ENCODE measurements at regions of chr2 and their contacts with region 1.

Region 1: DNA sequence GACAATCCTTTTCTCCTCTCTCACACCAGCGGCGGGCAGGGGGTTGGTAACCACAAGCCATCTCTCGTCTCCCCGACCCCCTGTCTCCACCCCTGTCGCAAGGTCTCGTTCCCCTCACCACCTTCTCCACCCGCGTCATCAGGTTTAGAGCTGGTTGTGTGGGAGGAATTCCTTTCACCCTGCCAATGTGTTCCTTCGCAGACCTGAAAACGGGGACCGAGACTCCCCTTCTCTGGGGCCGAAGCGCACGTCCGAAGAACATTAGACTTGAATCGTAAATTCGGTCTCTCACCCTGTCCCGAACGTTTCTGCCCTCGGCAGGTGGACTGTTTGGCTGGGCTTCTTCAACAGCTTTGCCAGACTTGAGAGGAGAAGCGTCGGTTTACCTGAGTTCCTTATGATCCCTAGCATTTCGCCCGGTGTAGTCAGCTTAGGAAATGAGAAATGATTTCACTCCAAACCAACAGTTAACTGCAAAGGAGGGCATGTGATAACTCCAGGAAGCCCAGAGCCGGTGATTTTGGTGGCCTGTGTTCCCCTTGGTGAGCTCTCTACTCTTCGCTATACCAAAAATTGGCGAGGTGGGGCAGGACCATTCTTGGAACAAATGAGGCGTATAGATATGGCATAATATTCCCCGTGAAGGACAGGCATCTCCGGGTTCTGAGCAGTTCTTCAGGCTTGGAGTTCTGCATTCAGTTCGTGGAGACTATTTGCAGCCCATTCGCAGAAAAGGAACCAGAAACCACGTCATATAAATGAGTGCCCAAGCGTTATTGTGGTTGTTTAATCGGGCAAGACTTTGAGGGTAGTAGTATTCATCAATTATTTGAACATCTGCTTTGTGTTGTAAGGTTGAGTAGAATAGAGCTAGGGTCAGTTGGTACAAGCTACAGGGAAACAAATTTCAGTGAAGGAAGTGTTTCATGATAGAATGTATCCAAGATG is 694 bp downstream of the CFAP36 start:
- H3K4me3 Mint-ChIP-seq: peak overlapping the region; percentile 90
- H3K27ac Mint-ChIP-seq: peak overlapping the region; percentile 95
- H3K4me1 Mint-ChIP-seq: peaks cover 19% of the 10 kb centered on the region
- H3K27me3 Mint-ChIP-seq: no peaks in the 10 kb centered on the region

Region 2: DNA sequence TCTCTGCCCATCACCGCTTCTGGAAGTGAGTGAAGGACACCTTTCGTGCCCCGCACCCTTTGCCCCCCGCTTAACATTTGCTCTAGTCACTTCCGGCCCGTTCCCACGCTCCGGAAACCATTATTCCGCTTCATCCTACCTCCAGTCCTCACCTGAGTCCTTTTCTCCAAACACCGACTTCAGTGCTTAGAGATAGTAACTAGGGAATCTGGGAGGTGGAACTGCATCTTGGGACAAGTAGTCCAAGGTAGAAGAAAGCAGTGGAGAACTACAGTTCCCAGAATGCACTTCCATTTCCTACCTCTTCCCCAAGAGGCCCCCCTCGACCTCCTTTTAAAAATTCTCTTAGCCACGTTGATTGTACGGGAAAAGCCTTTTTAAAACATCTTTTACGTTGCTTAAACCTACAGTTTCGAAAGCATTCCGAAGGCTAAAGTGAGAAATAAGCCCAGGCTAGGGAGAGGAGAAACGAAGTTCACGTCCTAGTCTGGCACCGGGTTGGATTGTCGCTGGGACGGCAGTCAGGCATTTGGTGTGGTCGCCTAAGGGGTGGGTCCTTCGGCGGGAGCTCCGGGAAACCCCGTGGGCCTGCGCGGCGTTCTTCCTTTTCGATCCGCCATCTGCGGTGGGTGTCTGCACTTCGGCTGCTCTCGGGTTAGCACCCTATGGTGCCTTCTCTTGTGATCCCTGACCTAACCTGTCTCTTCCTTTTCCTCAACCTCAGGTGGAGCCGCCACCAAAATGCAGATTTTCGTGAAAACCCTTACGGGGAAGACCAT is 287.9 kb before region 1 on chr2 and contains the starts of genes CLHC1 and RPS27A:
- intact Hi-C with region 1: loop called (anchors 10 kb)
- H3K4me3 Mint-ChIP-seq: peak within 1 kb of the TSS; percentile 99
- H3K27ac Mint-ChIP-seq: peak within 1 kb of the TSS; percentile 97
- H3K4me1 Mint-ChIP-seq: peaks cover 47% of the 10 kb centered on the region
- H3K27me3 Mint-ChIP-seq: no peaks in the 10 kb centered on the region

Region 3: DNA sequence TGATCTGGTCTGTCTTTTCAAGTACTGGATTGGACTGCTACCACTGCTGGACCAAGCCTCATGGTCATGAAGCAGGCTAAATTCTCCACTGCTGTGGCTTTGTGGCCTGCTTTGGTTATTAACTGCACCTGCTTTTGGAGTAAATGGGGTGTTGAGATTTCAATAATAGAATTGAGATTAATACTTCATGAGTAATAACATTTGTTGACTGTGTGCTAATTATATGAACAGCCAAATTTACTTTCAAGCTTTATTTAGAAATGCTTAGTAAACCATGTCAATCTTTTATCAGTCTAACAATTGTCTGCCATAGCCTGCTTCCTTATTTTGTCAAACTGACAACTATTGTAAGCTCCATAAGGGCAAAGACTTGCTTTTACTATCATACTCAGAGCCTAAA is 223.8 kb before region 1 on chr2:
- intact Hi-C with region 1: no loop called
- H3K4me3 Mint-ChIP-seq: no peak overlapping the region
- H3K27ac Mint-ChIP-seq: no peak overlapping the region
- H3K4me1 Mint-ChIP-seq: no peaks in the 10 kb centered on the region
- H3K27me3 Mint-ChIP-seq: no peaks in the 10 kb centered on the region

Region 4: DNA sequence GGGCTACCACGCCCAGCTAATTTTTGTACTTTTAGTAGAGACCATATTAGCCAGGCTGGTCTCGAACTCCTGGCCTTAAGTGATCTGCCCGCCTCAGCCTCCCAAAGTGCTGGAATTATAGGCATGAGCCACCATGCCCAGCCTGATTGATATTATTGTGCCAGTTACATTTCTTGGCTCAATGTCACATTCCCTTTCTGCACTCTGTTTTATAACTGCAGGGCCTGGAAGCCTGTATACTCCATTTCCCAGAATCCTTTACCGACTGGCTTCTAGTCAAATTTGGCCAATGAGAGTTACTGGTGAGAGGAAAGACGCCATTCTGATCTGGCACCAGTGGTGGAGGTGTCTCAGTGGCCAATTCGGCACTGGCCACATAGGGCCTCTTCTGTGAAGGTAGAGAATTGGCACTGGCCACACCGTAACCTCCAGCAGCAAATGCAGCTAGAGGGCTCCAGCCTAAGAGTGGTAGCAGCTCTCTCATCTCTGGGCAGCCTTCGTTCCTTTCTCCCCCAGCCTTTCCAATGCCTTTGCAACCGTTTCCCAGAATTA is 17.5 kb before region 1 on chr2:
- intact Hi-C with region 1: no loop called
- H3K4me3 Mint-ChIP-seq: no peak overlapping the region
- H3K27ac Mint-ChIP-seq: no peak overlapping the region
- H3K4me1 Mint-ChIP-seq: peaks cover 11% of the 10 kb centered on the region
- H3K27me3 Mint-ChIP-seq: no peaks in the 10 kb centered on the region

Measured in dendritic cell treated with granulocyte-macrophage colony-stimulating factor and Interleukin-4, amounts not matched to agents 40 ng/mL and 50 ng/mL, for 4 days (primary cell).